ENCODE measurements at regions of chr5 and their contacts with region 1.

Region 1: DNA sequence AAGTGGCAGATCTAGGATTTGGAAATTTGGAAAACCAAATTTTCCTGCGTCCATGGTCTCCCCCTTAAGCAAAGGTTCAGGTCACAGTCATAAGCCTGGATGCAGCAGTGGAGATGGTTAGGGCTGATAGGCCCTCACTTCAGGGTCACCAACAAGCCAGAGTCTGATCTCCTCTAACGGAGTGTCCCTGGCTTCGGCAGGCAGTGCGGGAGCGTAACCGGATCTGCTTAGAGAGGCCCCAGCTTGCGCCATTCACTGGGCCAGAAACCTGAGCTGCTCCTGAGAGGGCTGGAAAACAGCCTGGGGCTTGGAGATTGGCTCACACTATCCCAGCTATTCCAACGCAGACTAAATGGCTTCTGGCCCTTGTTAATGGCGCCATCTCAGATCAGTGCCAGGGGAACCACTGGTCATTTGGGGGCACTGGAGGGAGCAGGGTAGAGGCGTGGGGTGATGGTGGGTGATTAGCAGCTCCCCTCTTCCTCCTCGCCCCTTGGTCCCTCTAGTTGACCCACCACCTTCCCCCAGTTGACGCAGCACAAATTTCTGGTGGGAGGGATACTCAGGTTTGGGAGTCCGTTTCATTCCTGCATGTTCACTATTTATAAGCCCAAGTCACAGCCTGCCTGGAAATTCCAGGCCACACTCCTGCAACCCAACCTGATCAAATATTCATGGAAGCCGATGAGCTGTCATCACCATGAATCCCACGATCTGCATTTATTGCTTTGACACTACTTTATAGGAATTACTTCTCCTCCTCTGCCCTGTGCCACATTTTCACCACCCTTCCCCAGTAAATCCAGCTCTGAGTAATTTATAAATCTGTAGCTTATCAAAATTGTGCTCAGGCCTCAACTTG is 134.6 kb upstream of the CPEB4 start:
- DNase-seq: no peak
- ATAC-seq: peak; percentile 91

Region 2: GRCh38 chr5:173689737-173690360 is 63.7 kb before region 1 on chr5:
- intact Hi-C with region 1: loop called (anchors 5 kb)
- DNase-seq: no peak
- ATAC-seq: peak; percentile 75

Region 3: DNA sequence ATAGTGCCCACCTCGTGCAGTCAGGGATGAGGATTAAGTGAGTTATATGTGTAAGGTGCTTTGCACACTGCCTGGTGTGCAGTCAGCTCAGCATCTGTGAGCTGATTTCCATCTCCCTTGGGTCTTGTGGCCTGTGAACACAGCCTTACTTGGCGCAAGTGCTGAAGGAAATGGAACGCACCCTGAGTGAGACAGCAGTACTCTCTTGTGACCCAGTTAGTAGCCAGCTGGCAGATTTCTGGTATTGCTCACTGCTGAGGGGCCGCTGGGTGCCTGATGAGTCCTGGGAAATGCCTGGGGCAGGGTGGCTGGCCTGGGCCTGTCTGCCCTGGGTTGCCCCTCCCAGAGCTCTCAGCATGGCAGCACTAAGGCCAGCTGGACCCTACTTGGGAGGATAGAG is 46.1 kb before region 1 on chr5:
- intact Hi-C with region 1: loop called (anchors 2 kb)
- DNase-seq: no peak
- ATAC-seq: peak; percentile 92

Measured in Right ventricle myocardium inferior (tissue), 1 donor.